Activated CD8-positive, alpha-beta T cell treated with anti-CD3 and anti-CD28 coated beads for 36 hours (primary cell): ENCODE measurements at regions of chr9 and their contacts with region 1.

Region 1: DNA sequence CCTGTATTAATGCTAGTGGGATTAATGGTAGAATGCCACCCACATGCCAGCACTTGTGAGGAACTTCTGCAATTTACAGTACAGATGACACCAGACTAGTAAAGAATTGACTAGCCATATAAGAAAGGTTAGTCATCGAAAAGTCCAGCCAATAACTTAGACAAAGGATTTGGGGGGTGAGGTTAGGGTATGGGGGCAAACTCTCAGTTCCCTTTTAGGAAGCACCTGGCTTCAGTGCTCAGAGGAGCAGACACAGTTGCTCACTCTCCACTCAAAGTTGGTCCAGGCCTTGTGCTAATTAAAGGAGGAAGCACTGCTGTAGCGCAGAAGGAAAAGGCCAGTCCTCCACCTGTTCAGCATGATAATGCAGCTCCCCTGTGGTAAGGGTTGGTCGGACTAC is 25.2 kb downstream of the TGFBR1 start:
- DNase-seq: peak; percentile 40
- ATAC-seq: peak; percentile 35
- H3K4me3 Mint-ChIP-seq: no peak overlapping the region
- H3K27ac Mint-ChIP-seq: peak overlapping the region; percentile 81
- H3K4me1 Mint-ChIP-seq: peaks cover 76% of the 10 kb centered on the region
- H3K27me3 Mint-ChIP-seq: no peaks in the 10 kb centered on the region
- CTCF ChIP-seq: no peak

Region 2: DNA sequence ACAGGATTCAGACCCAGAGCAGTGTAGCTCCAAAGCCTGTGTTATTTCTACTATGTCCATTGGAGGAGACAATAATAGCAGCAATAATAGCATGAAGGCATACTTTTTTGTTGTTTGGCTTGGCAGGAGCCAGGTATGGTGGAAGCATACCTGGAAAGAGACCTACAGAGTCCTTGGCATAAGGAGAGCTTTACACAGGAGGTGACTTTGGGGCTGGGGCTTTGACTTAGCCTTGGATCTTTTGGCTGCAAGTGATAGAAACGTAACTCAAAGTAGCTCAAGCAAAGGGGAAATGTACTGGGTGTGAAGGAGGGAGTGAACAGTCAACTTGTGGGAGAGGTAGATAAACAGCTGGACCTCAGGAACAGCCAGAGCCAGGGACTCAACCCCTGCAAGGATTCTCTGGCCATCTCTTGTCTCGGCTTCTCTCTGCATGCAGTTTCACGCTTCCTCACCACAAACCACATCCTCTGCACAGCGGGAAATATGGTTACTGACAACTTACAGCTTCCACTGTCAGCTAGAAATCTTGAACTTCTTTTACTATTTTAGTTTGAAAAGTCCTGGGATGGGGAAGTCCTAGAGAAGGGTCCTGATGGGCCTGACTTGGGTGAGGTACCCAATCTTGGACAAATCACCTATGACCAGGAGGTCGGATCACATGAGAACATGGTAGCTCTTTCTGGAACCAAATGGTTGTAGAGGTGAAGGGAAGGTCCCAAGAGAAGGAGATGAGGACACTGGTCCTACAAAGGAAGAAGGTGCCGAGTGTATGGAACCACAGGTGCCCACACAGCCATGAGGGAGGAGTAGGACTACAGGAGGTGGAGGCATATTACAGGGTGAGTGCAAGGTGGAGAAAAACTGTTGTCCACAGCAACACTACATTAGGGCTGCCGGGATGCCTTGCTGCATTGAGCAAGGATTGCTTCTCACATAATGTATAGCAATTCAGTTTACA is 72.1 kb before region 1 on chr9:
- CTCF ChIA-PET with region 1: interaction called, 3 read pairs
- POLR2A ChIA-PET with region 1: interaction called, 6 read pairs
- intact Hi-C with region 1: loop called (anchors 5 kb)
- DNase-seq: peak; percentile 94
- ATAC-seq: peak; percentile 43
- H3K4me3 Mint-ChIP-seq: peak overlapping the region; percentile 63
- H3K27ac Mint-ChIP-seq: peak overlapping the region; percentile 86
- H3K4me1 Mint-ChIP-seq: peaks cover 63% of the 10 kb centered on the region
- H3K27me3 Mint-ChIP-seq: peaks cover 4% of the 10 kb centered on the region
- CTCF ChIP-seq: no peak

Region 3: DNA sequence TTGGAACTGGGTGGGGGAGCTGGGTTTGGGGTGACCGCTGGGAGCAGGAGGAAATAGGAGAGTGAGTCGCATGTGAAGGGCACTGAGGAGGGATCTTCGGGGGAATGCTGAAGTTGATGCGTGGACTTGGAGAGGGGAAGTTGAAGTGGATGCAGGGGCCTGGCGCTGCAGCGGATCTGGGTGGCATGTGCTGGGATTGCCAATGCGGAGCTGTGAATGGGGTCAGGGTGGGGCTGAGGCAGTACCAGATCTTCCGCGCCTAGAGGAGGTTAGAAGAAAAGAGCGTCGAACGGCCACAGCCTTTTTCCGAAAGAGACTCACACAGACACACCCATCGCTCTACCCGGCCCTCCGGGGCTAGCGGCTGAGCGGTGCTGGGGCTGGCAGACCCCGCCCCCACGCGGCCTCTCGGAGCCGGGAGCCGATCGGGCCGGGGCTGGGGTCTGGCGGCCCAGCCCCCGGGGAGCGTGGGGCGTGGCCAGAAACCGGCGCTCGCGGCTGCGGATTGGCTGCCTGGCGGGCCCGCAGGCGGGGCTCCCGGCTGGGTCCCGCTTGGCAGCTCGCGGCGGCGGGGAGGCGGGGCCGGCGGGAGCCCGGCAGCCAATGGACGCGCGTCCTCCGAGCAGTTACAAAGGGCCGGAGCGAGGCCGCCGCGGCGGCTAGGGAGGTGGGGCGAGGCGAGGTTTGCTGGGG is 25.5 kb before region 1 on chr9 and contains the start of gene TGFBR1:
- CTCF ChIA-PET with region 1: interaction called, 21 read pairs
- POLR2A ChIA-PET with region 1: interaction called, 3 read pairs
- intact Hi-C with region 1: loop called (anchors 2 kb)
- DNase-seq: peak; percentile 92
- ATAC-seq: peak; percentile 87
- H3K4me3 Mint-ChIP-seq: peak within 1 kb of the TSS; percentile 78
- H3K27ac Mint-ChIP-seq: peak within 1 kb of the TSS; percentile 86
- H3K4me1 Mint-ChIP-seq: peaks cover 47% of the 10 kb centered on the region
- H3K27me3 Mint-ChIP-seq: no peaks in the 10 kb centered on the region
- CTCF ChIP-seq: no peak
- total RNA-seq, gene TGFBR1: 34.3 to 36.5 TPM